Head of caudate nucleus (tissue), 42 donors: ENCODE measurements at regions of chr10 and their contacts with region 1.

Region 1: GRCh38 chr10:931416-932318 is at the start of gene LARP4B:
- DNase-seq: peak; percentile 93 to 99 (median 98)

Region 2: DNA sequence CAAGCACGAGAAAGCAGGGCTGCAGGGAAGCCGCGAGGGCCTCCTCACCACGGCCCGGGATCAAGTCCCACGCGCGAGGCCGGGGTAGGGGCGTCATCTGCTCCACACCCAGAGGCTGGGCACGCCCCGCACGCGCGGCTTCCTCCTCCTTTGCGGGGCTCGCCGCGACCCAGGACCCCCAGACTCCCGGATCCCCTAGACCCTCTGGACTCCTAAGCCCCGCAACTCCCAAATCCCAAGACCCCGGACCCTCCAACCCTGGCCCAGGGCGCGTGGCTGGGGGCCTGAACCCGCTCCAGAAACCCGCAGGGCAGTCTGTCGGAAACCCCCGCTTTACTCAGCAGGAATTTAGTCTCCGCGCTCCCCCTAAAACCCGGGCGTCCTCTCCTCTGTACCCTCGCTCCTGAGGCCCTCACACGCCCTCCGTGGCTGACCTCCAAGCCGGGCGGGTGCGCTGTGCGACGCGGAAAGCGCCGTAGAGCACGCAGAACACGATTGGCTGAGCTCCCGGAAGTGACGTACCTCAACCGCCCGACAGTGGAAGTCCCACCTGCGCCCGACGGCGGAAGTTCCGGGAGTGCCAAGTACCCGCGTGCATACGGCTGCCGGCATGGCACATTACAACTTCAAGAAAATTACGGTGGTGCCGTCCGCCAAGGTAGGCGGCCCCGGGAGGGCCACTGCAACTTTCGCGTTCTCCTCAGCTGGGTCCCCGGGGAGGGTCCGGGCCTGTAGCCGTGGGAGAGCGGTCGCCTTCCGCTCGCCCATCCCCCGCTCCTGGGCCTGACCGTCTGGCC is 56.4 kb after region 1 on chr10 and contains the start of gene GTPBP4:
- intact Hi-C with region 1: loop called (anchors 5 kb)
- DNase-seq: peak; percentile 97 to 100 (median 99)

Region 3: GRCh38 chr10:1048732-1049424 is 117.2 kb after region 1 on chr10 and contains the start of gene IDI1:
- intact Hi-C with region 1: loop called (anchors 5 kb)
- DNase-seq: peak; percentile 95 to 99 (median 98)